Activated T-helper 1 cell treated with anti-CD3 and anti-CD28 coated beads, Interleukin-12 subunit alpha, Interleukin-12 subunit beta, Interleukin-2, Interleukin-4 antibody, amounts not matched to agents 30 ng/mL and 10 ng/mL and 1 ng/mL, durations not matched to agents 14 hours and 24 hours and 36 hours (primary cell): ENCODE measurements at regions of chr12 and their contacts with region 1.

Region 1: DNA sequence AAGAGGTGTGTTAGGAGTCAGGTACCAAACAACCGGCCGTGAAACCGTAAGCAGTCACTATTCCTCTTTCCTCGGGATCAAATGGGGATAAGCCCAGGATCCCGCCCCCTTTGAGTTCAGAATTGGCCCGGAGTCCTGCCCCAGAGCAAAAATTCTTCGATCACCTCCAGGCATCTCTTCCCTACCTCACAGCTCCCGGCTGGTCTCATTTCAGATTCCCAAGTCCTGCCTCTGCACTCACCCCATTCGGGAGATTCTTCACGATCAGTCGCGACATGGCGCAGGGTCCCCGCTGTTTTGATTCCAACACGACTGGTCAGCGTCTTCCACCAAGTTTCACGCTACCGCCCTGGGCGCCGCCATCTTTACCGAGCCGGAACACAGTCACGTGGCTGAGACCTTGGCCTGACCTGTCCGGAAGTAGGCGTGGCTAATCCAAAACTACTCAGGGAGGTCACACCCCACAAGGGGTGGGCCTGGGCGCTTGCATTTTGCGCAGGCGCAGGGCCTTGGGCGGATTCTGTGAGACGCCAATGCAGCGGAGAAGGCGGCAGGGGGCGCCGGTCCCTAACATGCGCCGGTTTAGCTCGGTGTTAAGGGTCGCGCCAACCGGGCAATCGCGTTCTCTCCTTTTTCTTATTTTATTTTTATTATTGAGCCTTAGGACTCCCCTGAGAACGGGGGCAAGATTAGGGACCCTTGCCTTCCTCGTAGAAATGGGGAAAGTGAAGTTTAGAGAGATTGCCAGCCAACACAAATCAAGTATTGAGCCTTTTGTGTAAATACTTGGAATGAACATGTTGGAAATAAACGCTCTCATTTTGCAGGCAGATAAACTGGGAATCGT is at the start of gene RBM19:
- DNase-seq: peak; percentile 97
- H3K4me3 Mint-ChIP-seq: peak within 1 kb of the TSS; percentile 99
- H3K27ac Mint-ChIP-seq: peak within 1 kb of the TSS; percentile 99
- H3K4me1 Mint-ChIP-seq: peaks cover 60% of the 10 kb centered on the region
- H3K27me3 Mint-ChIP-seq: peaks cover 3% of the 10 kb centered on the region
- total RNA-seq, gene RBM19: 102 TPM in 2 replicates

Region 2: GRCh38 chr12:112992541-112993398 is 973.4 kb before region 1 on chr12:
- intact Hi-C with region 1: loop called (anchors 10 kb)
- DNase-seq: peak; percentile 43
- H3K4me3 Mint-ChIP-seq: no peak overlapping the region
- H3K27ac Mint-ChIP-seq: peak overlapping the region; percentile 43
- H3K4me1 Mint-ChIP-seq: peaks cover 57% of the 10 kb centered on the region
- H3K27me3 Mint-ChIP-seq: no peaks in the 10 kb centered on the region

Region 3: DNA sequence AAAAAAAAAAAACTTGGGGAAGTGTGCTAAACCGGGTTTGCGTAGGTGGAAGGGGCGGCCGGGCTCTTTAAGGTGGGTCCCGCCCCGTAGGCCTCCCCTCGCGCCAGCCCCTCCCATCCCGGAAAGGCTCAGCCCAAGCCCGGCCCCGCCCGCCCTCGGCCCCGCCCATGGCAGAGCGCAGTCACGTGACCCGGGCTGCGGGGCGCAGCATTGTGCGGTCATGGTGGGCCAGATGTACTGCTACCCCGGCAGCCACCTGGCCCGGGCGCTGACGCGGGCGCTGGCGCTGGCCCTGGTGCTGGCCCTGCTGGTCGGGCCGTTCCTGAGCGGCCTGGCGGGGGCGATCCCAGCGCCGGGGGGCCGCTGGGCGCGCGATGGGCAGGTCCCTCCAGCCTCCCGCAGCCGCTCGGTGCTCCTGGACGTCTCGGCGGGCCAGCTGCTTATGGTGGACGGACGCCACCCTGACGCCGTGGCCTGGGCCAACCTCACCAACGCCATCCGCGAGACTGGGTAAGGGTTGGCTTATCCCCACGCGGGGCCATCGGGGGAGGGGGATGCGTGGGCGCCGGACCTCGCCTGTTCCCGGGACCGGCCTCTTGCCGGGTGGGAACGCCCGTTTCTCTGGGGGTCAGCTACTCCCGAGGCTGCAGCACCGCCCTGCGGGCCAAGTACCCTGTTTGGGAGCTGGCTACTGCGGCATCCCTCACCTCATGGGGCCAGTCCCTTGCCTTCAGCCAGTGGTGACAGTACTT is 607.6 kb before region 1 on chr12 and contains the start of gene PLBD2:
- intact Hi-C with region 1: loop called (anchors 2 kb)
- DNase-seq: peak; percentile 89
- H3K4me3 Mint-ChIP-seq: peak within 1 kb of the TSS; percentile 89
- H3K27ac Mint-ChIP-seq: peak within 1 kb of the TSS; percentile 69
- H3K4me1 Mint-ChIP-seq: peaks cover 13% of the 10 kb centered on the region
- H3K27me3 Mint-ChIP-seq: peaks cover 4% of the 10 kb centered on the region
- total RNA-seq, gene PLBD2: 15.3 and 16.3 TPM in 2 replicates

Region 4: GRCh38 chr12:113862590-113863454 is 103.4 kb before region 1 on chr12:
- intact Hi-C with region 1: no loop called
- DNase-seq: no peak
- H3K4me3 Mint-ChIP-seq: no peak overlapping the region
- H3K27ac Mint-ChIP-seq: no peak overlapping the region
- H3K4me1 Mint-ChIP-seq: peaks cover 12% of the 10 kb centered on the region
- H3K27me3 Mint-ChIP-seq: no peaks in the 10 kb centered on the region

Region 5: DNA sequence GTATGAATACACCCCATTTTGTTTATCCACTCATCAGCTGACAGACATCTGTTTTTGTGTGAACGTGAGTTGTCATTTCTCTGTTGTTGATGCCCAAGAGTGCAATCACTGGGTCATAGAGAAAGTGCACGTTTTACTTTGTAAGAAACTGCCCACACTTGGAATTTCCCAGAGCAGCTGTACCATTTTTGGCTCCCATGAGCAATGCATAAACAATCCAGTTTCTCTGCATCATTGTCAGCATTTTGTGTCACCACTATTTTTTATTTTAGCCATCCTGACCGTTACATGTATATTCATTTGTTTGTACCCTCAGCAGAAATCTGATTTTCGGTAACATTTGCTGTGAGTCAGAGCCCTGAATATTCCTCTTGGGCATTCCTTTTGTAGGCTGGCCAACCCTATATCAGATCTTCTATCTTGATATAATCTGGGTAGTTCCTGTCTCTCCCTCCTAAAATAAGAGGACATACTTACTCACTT is 62.8 kb before region 1 on chr12:
- intact Hi-C with region 1: loop called (anchors 1 kb)
- DNase-seq: no peak
- H3K4me3 Mint-ChIP-seq: no peak overlapping the region
- H3K27ac Mint-ChIP-seq: peak overlapping the region; percentile 16
- H3K4me1 Mint-ChIP-seq: peaks cover 9% of the 10 kb centered on the region
- H3K27me3 Mint-ChIP-seq: no peaks in the 10 kb centered on the region

Region 6: GRCh38 chr12:113914176-113914575 is 52.0 kb before region 1 on chr12:
- intact Hi-C with region 1: no loop called
- DNase-seq: no peak
- H3K4me3 Mint-ChIP-seq: no peak overlapping the region
- H3K27ac Mint-ChIP-seq: no peak overlapping the region
- H3K4me1 Mint-ChIP-seq: no peaks in the 10 kb centered on the region
- H3K27me3 Mint-ChIP-seq: no peaks in the 10 kb centered on the region

Region 7: DNA sequence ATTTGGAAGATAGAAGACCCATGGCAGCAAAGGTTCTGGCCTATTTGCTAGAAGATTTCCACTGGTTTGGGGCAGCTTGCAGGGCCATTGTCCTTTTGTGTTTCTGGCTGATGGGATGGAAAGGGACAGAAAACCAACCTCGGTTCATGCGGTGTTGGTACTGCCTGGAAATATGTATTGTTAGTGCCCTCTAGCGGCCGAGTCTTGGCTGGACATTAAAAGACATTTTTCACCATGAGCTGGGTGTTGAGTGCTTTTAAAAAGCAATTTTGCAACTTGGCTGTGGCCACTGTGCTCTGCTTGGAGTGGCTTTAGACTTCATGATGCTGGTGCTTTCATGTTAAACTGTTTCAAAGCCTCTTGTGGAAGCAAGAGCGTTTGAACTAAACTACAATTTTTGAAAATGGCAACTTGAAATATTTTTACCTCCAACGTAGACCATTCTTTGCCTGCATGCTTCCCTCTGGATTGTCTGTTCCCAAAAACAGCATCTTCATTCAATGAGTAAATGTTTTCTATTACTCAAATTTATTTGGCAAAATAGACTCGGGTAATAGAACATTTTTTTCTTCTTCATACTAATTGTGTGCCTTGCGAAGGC is 542.5 kb after region 1 on chr12:
- intact Hi-C with region 1: loop called (anchors 1 kb)
- DNase-seq: peak; percentile 33
- H3K4me3 Mint-ChIP-seq: no peak overlapping the region
- H3K27ac Mint-ChIP-seq: no peak overlapping the region
- H3K4me1 Mint-ChIP-seq: no peaks in the 10 kb centered on the region
- H3K27me3 Mint-ChIP-seq: peaks cover 4% of the 10 kb centered on the region